CD14-positive monocyte (primary cell): ENCODE measurements at regions of chr20 and their contacts with region 1.

Region 1: DNA sequence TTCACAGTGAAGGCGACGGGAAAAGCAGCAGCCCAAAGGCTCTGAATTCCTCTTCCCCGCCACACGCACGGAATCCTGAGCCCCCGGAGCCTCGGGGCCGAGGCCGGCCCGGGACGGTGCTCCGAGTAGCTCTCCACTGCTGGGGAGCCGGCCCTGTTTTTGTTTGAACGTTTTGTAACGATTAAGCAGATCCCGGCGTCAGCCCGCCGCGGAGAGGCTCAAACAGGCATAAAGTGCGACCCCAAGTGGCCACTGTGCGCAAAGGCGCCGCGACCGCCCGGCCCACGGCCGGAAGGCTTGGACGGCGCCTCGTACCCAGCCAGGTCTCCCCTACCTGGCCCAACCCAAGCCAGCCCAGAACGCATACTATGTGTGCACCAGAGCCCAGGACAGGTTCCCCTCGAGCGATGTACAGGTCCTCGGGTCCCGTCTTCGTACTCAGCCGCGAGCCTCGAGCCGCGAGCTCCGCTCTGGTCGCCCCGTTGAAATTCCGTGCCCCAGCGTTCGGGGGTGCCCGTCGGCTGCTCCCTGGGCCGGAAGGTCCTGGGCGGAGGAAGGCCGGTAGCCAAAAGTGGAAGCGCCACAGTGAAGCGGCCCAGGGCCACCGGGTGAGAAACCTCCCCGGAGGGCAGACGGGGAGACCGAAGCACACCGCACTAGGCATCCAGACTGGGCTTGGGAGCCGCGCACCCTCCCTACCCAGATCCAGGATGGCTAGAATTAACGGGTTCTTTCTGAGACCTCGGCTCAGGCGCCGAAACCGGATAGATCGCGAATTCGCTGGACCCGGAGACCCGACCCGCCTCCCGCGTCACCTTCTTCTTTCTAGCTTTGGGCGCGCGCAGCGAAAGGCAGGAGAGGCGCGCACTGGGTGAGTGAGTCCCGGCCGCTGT is 1.2 kb upstream of the MAFB start:
- DNase-seq: peak; percentile 86 to 89 (median 86)
- H3K4me3 ChIP-seq: peak overlapping the region; percentile 42 to 99 (median 72)
- H3K4me3 Mint-ChIP-seq: peak overlapping the region; percentile 83 to 86
- H3K27ac ChIP-seq: peak overlapping the region; percentile 95 to 99
- H3K27ac Mint-ChIP-seq: peak overlapping the region; percentile 93 to 99 (median 96)
- H3K4me1 ChIP-seq: peaks cover 34 to 54% of the 10 kb centered on the region in 2 donors
- H3K4me1 Mint-ChIP-seq: peaks cover 46% of the 10 kb centered on the region
- H3K27me3 ChIP-seq: peaks cover 51 to 69% of the 10 kb centered on the region in 2 donors
- H3K27me3 Mint-ChIP-seq: peaks cover 71 to 81% (median 75%) of the 10 kb centered on the region in 3 donors
- CTCF ChIP-seq: peak; percentile 92

Region 2: DNA sequence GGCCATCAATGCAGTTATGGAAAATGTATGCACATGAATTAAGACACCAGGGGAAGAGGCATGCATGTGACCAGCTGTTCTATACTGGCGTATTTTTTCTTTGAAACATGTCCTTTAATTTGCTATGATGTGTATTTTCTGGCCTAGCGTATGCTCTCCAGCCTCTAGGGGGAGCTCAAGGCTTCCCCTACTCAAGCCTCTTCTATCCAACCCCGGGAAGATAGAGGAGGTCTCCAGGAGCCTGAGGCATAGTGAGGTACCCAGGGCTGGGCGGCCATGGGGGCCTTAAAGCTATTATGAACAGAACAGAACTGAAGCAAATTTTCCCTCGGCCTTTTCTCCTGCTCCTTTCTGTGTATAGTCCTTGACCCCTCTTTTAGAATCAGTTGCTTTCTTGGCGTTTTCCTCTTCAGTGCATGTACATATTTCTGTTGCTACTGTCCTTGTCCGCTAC is 530.1 kb before region 1 on chr20:
- intact Hi-C with region 1: loop called (anchors 2 to 5 kb)
- DNase-seq: peak; percentile 49 to 65 (median 61)
- H3K4me3 ChIP-seq: no peak overlapping the region
- H3K4me3 Mint-ChIP-seq: no peak overlapping the region
- H3K27ac ChIP-seq: no peak overlapping the region
- H3K27ac Mint-ChIP-seq: no peak overlapping the region
- H3K4me1 ChIP-seq: no peaks in the 10 kb centered on the region
- H3K4me1 Mint-ChIP-seq: no peaks in the 10 kb centered on the region
- H3K27me3 ChIP-seq: peaks cover 5 to 6% of the 10 kb centered on the region in 2 donors
- H3K27me3 Mint-ChIP-seq: peaks cover 1 to 14% (median 2%) of the 10 kb centered on the region in 3 donors
- CTCF ChIP-seq: peak; percentile 90

Region 3: GRCh38 chr20:40463171-40463570 is 227.0 kb before region 1 on chr20:
- intact Hi-C with region 1: loop called in 1 of 2 experiments (anchors 10 kb)
- DNase-seq: no peak
- H3K4me3 ChIP-seq: no peak overlapping the region
- H3K4me3 Mint-ChIP-seq: no peak overlapping the region
- H3K27ac ChIP-seq: peak overlapping the region in 1 of 2 donors; percentile 83
- H3K27ac Mint-ChIP-seq: peak overlapping the region in 6 of 7 donors; percentile 49 to 91 (median 78)
- H3K4me1 ChIP-seq: peaks cover 47 to 59% of the 10 kb centered on the region in 2 donors
- H3K4me1 Mint-ChIP-seq: peaks cover 56% of the 10 kb centered on the region
- H3K27me3 ChIP-seq: no peaks in the 10 kb centered on the region
- H3K27me3 Mint-ChIP-seq: peaks cover 2 to 6% (median 3%) of the 10 kb centered on the region in 3 donors
- CTCF ChIP-seq: no peak

Region 4: DNA sequence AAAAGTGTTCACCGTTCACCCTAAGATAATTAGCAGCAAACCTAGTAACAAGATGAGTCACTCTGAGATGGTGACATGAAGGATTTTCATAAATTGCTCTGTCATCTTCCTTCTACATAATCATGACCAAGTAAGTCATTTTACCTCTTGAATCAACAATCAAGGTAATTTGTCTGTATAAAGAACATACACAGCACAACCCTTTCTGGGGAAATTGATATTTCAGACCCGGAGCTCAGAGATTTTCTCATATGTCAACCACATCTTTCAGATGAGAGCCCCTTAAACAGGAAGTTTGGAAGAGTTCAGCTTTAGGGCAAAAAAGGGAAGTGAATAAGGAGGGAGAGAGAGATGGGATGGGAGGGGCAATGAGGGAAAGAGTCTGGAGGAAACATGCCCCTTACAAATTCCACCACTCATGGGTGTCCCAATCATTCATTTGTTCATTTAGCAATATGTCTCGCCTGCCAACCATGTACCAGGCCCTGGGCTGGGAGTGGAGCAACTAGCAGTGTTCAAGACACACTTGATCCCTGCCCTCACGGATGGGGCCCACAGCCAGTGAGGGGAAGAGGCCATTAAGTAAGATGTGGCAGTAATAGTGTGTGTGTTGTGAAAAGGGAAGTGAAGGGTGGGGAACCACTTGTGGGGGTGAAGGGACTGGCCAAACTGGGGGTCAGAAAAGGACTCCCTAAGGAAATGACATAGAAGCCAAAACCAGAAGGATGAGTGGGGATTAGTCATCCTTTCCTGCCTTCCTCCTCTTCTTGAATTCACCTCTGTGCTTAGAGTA is 192.1 kb before region 1 on chr20:
- intact Hi-C with region 1: loop called (anchors 5 to 10 kb)
- DNase-seq: peak; percentile 96 to 99 (median 97)
- H3K4me3 ChIP-seq: peak overlapping the region in 1 of 3 experiments; percentile 40
- H3K4me3 Mint-ChIP-seq: peak overlapping the region; percentile 17 to 67
- H3K27ac ChIP-seq: peak overlapping the region; percentile 96 to 99
- H3K27ac Mint-ChIP-seq: peak overlapping the region; percentile 98 to 100 (median 100)
- H3K4me1 ChIP-seq: peaks cover 82% of the 10 kb centered on the region in 2 donors
- H3K4me1 Mint-ChIP-seq: peaks cover 86% of the 10 kb centered on the region
- H3K27me3 ChIP-seq: no peaks in the 10 kb centered on the region
- H3K27me3 Mint-ChIP-seq: no peaks in the 10 kb centered on the region
- CTCF ChIP-seq: no peak

Region 5: DNA sequence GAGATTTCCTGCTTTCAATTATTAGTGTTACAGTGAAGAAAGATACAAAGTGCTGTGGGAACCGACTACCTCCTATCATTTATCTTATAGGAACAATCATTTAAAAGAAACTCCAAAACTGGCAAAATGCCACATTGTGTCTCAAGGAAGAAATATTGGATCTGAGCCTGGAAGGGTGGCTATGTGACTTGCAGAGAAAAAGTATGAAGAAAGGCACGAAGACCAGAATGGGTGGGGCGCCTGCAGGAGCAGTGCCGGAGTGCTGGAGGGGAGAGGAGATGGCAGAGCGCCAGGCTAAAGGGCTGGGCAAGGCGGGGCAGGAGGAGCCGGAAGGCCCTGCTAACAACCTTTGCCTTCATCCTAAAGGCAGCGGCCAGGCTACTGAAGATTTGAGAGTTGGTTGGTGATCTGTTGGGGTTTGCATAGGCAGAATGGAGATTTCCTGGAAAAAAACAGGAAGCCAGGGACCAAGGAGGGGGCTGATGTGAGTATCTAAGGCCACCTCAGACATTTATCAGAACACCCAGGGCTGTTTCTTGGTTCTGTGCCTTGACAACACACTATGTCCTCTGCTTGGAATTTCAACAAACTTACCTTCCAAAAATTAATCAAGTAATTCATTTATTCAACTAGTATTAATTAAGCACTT is 126.8 kb before region 1 on chr20:
- intact Hi-C with region 1: loop called in 1 of 2 experiments (anchors 2 kb)
- DNase-seq: no peak
- H3K4me3 ChIP-seq: no peak overlapping the region
- H3K4me3 Mint-ChIP-seq: no peak overlapping the region
- H3K27ac ChIP-seq: peak overlapping the region in 1 of 2 donors; percentile 85
- H3K27ac Mint-ChIP-seq: peak overlapping the region in 4 of 7 donors; percentile 51 to 86 (median 78)
- H3K4me1 ChIP-seq: peaks cover 34 to 42% of the 10 kb centered on the region in 2 donors
- H3K4me1 Mint-ChIP-seq: peaks cover 42% of the 10 kb centered on the region
- H3K27me3 ChIP-seq: no peaks in the 10 kb centered on the region
- H3K27me3 Mint-ChIP-seq: peaks cover 2 to 7% (median 4%) of the 10 kb centered on the region in 3 donors
- CTCF ChIP-seq: no peak

Region 6: DNA sequence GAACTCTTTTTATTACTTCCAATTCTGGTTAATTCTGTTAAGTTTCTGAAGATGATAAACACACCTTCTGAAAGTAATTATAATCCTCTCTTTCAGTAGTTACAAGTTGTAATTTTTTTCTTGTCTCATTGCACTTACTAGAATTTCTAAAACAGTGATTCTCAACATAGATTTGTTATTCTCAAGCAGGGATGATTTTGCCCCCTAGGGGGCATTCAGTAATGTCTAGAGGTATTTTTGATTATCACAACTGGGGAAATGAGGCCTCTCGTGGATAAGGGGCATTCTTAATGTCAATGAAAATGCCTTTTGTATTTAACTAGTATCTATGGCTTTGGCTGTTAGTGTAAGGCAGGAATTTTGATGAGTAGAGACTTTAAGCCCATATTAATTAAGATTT is 38.3 kb after region 1 on chr20:
- intact Hi-C with region 1: no loop called
- DNase-seq: no peak
- H3K4me3 ChIP-seq: no peak overlapping the region
- H3K4me3 Mint-ChIP-seq: no peak overlapping the region
- H3K27ac ChIP-seq: no peak overlapping the region
- H3K27ac Mint-ChIP-seq: no peak overlapping the region
- H3K4me1 ChIP-seq: no peaks in the 10 kb centered on the region
- H3K4me1 Mint-ChIP-seq: no peaks in the 10 kb centered on the region
- H3K27me3 ChIP-seq: peaks cover 4 to 11% of the 10 kb centered on the region in 2 donors
- H3K27me3 Mint-ChIP-seq: peaks cover 4 to 16% (median 16%) of the 10 kb centered on the region in 3 donors
- CTCF ChIP-seq: peak; percentile 21

Region 7: GRCh38 chr20:41028348-41029148 is 338.4 kb after region 1 on chr20 and contains the start of gene TOP1:
- intact Hi-C with region 1: no loop called
- DNase-seq: peak; percentile 100
- H3K4me3 ChIP-seq: peak within 1 kb of the TSS; percentile 76 to 88 (median 83)
- H3K4me3 Mint-ChIP-seq: peak within 1 kb of the TSS; percentile 88 to 90
- H3K27ac ChIP-seq: peak within 1 kb of the TSS; percentile 77 to 95
- H3K27ac Mint-ChIP-seq: peak within 1 kb of the TSS; percentile 92 to 98 (median 97)
- H3K4me1 ChIP-seq: peaks cover 34 to 47% of the 10 kb centered on the region in 2 donors
- H3K4me1 Mint-ChIP-seq: peaks cover 44% of the 10 kb centered on the region
- H3K27me3 ChIP-seq: no peaks in the 10 kb centered on the region
- H3K27me3 Mint-ChIP-seq: peaks cover 0 to 2% (median 0%) of the 10 kb centered on the region in 3 donors
- CTCF ChIP-seq: no peak
- polyA plus RNA-seq, gene TOP1: 6.9 to 11.5 (median 11.5) TPM